SK-N-SH (cell line): ENCODE measurements at regions of chr11 and their contacts with region 1.

Region 1: GRCh38 chr11:17504330-17505107 is 27.9 kb upstream of the ABCC8 start:
- DNase-seq: peak; percentile 88
- H3K4me3 ChIP-seq: no peak overlapping the region; a peak in 1 of 4 replicates
- H3K27ac ChIP-seq: no peak overlapping the region
- H3K4me1 ChIP-seq: peaks cover 0 to 4% of the 10 kb centered on the region in 2 experiments; a peak in 1 of 4 replicates
- H3K27me3 ChIP-seq: no peaks in the 10 kb centered on the region
- CTCF ChIP-seq: peak; percentile 87
- EP300 ChIP-seq: no peak
- RAD21 ChIP-seq: peak; percentile 96

Region 2: DNA sequence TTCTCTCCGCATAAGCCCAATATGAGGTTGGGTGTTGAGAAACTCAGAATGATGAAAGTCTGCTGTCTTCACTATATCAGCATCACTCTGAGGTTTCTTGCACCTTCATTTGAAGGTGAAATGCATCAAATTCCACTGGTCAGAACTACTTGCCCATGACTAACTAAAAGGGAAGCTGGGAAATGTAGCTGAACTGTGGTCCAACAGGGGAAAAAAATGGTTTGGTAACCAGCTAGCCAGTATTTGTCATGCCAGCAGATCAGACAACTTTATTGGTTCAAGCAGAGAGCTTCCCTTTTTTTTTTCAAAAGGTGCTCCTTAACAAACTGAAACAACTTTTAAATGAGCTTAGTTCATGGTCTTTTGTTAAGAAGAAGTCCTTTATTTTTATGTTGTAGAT is 282.6 kb before region 1 on chr11:
- CTCF ChIA-PET with region 1: interaction called, 11 read pairs
- POLR2A ChIA-PET with region 1: no interaction called
- DNase-seq: no peak
- H3K4me3 ChIP-seq: no peak overlapping the region
- H3K27ac ChIP-seq: no peak overlapping the region
- H3K4me1 ChIP-seq: no peaks in the 10 kb centered on the region
- H3K27me3 ChIP-seq: no peaks in the 10 kb centered on the region
- CTCF ChIP-seq: no peak
- EP300 ChIP-seq: no peak
- RAD21 ChIP-seq: no peak

Region 3: DNA sequence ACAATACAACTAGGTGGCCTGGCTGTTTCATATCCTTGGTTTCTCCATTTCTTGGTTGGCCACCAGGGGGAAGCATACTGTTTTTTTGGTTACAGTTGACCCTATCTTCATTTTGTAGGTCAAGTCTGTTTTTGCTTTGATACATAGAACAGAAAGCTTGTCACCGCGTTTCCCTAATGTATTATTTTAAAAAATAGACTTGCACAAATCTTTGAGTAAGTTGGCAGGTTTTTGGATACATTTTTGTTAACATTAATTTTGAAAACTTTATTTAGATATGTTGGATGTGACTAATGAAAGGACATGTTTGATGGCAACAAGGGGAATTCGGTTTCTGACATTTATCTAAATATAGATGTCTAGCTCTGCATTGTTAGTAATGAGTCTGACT is 149.9 kb before region 1 on chr11:
- CTCF ChIA-PET with region 1: interaction called, 21 read pairs
- POLR2A ChIA-PET with region 1: no interaction called
- DNase-seq: peak; percentile 71
- H3K4me3 ChIP-seq: peak overlapping the region in 1 of 2 experiments; percentile 77; a peak in 1 of 4 replicates
- H3K27ac ChIP-seq: no peak overlapping the region
- H3K4me1 ChIP-seq: peaks cover 5 to 14% of the 10 kb centered on the region in 2 experiments; a peak in 3 of 4 replicates
- H3K27me3 ChIP-seq: no peaks in the 10 kb centered on the region
- CTCF ChIP-seq: peak; percentile 76
- EP300 ChIP-seq: no peak
- RAD21 ChIP-seq: peak; percentile 42

Region 4: DNA sequence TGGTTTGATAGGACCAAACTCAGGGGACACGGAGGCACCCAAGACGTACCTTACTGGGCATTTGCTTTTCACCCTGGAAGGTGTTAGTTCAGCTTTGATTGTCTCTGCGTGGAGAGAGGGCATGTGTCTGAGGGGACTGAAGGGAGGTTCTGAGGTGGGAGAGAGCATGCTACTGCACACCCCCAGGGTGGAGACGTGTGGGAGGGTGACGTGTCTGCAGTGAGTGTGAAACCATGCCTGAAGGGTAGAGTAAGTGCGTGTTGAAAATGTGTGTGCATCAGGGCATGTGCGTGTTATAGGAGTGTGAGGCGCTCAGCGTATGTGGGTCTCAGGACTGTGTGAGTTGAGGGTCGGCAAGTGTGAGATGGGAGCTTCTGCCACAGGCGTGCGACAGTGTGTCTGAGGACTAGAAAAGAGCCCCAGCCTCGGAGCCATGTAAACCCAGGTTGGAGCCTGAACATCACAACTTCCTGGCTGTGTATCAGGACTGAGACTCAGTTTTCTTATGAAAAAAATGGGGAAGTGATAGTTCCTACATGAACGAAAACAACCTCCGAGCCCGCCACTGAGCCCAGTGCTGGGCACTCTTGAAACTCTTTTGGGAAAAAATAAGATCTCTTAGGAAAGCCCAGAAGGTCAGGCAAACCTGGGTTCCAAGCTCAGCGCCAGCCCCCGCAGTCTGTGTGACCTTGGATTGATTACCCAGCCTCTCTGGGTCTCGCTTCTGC is 104.3 kb before region 1 on chr11:
- CTCF ChIA-PET with region 1: interaction called, 1,101 read pairs
- POLR2A ChIA-PET with region 1: no interaction called
- DNase-seq: no peak
- H3K4me3 ChIP-seq: no peak overlapping the region
- H3K27ac ChIP-seq: no peak overlapping the region
- H3K4me1 ChIP-seq: peaks cover 0 to 2% of the 10 kb centered on the region in 2 experiments; a peak in 1 of 4 replicates
- H3K27me3 ChIP-seq: no peaks in the 10 kb centered on the region
- CTCF ChIP-seq: no peak
- EP300 ChIP-seq: no peak
- RAD21 ChIP-seq: no peak

Region 5: GRCh38 chr11:17432002-17432401 is 72.5 kb before region 1 on chr11:
- CTCF ChIA-PET with region 1: interaction called, 11 read pairs
- POLR2A ChIA-PET with region 1: no interaction called
- DNase-seq: no peak
- H3K4me3 ChIP-seq: no peak overlapping the region
- H3K27ac ChIP-seq: no peak overlapping the region
- H3K4me1 ChIP-seq: peaks cover 0 to 9% of the 10 kb centered on the region in 2 experiments; a peak in 1 of 4 replicates
- H3K27me3 ChIP-seq: no peaks in the 10 kb centered on the region
- CTCF ChIP-seq: no peak
- EP300 ChIP-seq: no peak
- RAD21 ChIP-seq: no peak

Region 6: GRCh38 chr11:17479284-17480214 is 25.0 kb before region 1 on chr11:
- CTCF ChIA-PET with region 1: interaction called, 14 read pairs
- POLR2A ChIA-PET with region 1: no interaction called
- DNase-seq: peak; percentile 85
- H3K4me3 ChIP-seq: peak overlapping the region in 1 of 2 experiments; percentile 25; a peak in 1 of 4 replicates
- H3K27ac ChIP-seq: no peak overlapping the region; a peak in 1 of 4 replicates
- H3K4me1 ChIP-seq: peaks cover 0 to 14% of the 10 kb centered on the region in 2 experiments; a peak in 1 of 4 replicates
- H3K27me3 ChIP-seq: peaks cover 28% of the 10 kb centered on the region
- CTCF ChIP-seq: no peak
- EP300 ChIP-seq: no peak
- RAD21 ChIP-seq: 0 out of 2 replicates have a peak, but pooled peaks have one; percentile 18

Region 7: GRCh38 chr11:17528181-17528691 is 23.7 kb after region 1 on chr11:
- CTCF ChIA-PET with region 1: interaction called, 499 read pairs
- POLR2A ChIA-PET with region 1: no interaction called
- DNase-seq: peak; percentile 88
- H3K4me3 ChIP-seq: peak overlapping the region in 1 of 2 experiments; percentile 41; a peak in 1 of 4 replicates
- H3K27ac ChIP-seq: no peak overlapping the region
- H3K4me1 ChIP-seq: peaks cover 0 to 11% of the 10 kb centered on the region in 2 experiments; a peak in 1 of 4 replicates
- H3K27me3 ChIP-seq: peaks cover 4% of the 10 kb centered on the region; the same call in 1 of the 2 replicates
- CTCF ChIP-seq: peak; percentile 84
- EP300 ChIP-seq: no peak
- RAD21 ChIP-seq: peak; percentile 77

Region 8: DNA sequence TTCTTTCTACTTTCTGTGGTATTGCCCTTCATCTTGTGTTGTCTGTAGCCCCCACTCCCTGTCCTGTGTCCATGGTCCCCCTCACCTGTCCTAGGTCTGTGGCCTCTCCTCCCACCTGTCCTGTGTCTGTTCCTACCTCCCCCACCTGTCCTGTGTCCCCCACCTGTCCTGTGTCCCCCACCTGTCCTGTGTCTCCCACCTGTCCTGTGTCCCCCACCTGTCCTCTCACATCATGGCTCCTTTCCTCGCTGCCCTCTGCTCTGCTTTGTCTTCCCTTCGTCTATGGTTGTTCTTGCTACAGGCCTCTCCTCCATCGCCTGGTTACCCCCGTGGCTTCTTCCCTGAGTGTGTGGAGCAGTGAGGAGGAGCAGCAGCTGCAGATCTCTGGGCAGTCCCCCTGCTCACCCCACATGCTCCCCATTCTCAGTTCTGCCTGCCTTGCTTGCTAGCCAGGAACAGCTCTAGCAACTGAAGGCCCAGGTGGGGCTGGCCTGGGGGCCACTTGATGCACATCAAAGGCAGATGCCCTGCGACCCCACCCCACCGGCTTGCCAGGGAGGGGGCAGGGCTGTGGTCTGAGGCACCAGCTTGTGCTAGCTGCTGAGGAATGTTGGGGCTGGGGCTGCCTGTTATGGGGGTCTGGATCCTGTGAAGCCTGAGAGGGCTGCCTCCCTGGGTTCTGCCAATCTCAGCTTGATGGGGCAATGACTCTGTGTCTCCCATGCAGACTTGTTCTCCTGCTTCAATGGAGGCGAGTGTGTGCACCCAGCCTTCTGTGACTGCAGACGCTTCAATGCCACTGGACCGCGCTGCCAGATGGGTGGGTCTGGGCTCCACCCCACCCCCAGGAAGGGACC is 48.1 kb after region 1 on chr11:
- CTCF ChIA-PET with region 1: no interaction called
- POLR2A ChIA-PET with region 1: no interaction called
- DNase-seq: no peak
- H3K4me3 ChIP-seq: no peak overlapping the region
- H3K27ac ChIP-seq: no peak overlapping the region
- H3K4me1 ChIP-seq: no peaks in the 10 kb centered on the region
- H3K27me3 ChIP-seq: no peaks in the 10 kb centered on the region
- CTCF ChIP-seq: no peak
- EP300 ChIP-seq: no peak
- RAD21 ChIP-seq: no peak

Region 9: GRCh38 chr11:17612221-17613188 is 108.0 kb after region 1 on chr11:
- CTCF ChIA-PET with region 1: no interaction called
- POLR2A ChIA-PET with region 1: no interaction called
- DNase-seq: no peak
- H3K4me3 ChIP-seq: no peak overlapping the region
- H3K27ac ChIP-seq: no peak overlapping the region
- H3K4me1 ChIP-seq: no peaks in the 10 kb centered on the region
- H3K27me3 ChIP-seq: no peaks in the 10 kb centered on the region; the same call in 1 of the 2 replicates
- CTCF ChIP-seq: no peak
- EP300 ChIP-seq: no peak
- RAD21 ChIP-seq: no peak